CD8-positive, alpha-beta memory T cell (primary cell): ENCODE measurements at regions of chr2 and their contacts with region 1.

Region 1: DNA sequence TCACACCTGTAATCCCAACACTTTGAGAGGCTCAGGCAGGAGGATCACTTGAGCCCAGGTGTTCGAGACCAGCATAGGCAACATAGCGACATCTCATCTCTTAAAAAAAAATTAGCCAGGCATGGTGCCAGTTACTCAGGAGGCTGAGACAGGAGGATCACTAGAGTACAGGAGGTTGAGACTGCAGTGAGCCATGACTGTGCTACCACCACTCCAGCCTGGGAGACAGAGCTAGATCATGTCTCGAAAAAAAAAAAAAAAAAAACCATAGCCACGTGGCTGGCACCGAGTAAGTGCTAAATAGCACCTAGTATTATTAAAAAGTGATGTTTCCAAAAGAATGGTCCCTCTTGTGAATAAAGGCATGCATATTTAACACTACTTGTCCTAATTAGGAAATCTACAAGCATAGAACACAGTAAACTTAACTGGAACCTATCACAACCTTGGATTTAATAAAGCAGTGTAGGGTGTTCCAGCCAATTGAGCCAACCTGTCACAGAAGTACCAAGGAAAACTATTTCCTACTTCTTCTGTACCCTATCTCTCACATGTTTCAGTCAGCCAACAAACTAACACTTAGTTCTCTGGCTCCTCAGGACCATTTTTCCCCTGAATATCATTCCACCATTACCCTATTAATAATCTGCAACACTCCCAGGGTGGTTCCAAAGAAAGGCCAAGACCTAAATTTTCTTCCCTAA is 8.8 kb downstream of the RAB1A start:
- DNase-seq: no peak
- H3K4me3 ChIP-seq: no peak overlapping the region
- H3K4me3 Mint-ChIP-seq: peak overlapping the region; percentile 10 to 60 (median 41)
- H3K27ac ChIP-seq: no peak overlapping the region
- H3K27ac Mint-ChIP-seq: peak overlapping the region in 6 of 8 donors; percentile 17 to 64 (median 28)
- H3K4me1 ChIP-seq: peaks cover 48% of the 10 kb centered on the region
- H3K4me1 Mint-ChIP-seq: peaks cover 61 to 95% (median 74%) of the 10 kb centered on the region in 3 donors
- H3K27me3 ChIP-seq: no peaks in the 10 kb centered on the region
- H3K27me3 Mint-ChIP-seq: no peaks in the 10 kb centered on the region

Region 2: DNA sequence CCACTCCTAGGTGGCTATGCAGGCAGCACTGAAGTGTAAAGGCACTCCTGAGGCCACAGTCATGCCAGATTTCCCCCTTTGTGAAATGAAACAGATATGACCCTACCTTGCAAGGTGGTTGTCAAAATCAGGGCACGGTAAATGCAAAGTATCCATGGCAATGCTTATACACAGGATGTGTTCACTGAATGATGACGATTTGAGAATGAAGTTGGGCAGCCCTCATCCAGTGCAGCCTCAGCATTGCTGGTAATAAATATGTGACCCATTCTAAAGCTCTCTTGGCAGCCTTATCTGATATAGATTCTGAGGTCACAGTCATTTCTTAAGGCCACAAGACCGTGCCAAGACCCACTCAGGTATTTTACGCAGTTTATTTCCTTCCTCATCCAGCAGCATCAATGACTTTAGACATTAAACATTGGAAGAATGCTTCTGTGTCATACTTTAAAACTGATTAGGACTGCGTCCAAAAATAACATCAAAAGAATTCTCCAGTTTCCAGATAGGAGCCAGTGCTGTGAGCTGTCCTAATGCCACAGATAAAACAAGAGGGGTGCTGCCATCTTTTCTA is 341.9 kb before region 1 on chr2:
- CTCF ChIA-PET with region 1: no interaction called
- POLR2A ChIA-PET with region 1: no interaction called
- DNase-seq: no peak
- H3K4me3 ChIP-seq: no peak overlapping the region
- H3K4me3 Mint-ChIP-seq: no peak overlapping the region
- H3K27ac ChIP-seq: no peak overlapping the region
- H3K27ac Mint-ChIP-seq: peak overlapping the region in 1 of 8 donors; percentile 40
- H3K4me1 ChIP-seq: no peaks in the 10 kb centered on the region
- H3K4me1 Mint-ChIP-seq: no peaks in the 10 kb centered on the region
- H3K27me3 ChIP-seq: no peaks in the 10 kb centered on the region
- H3K27me3 Mint-ChIP-seq: peaks cover 0 to 3% of the 10 kb centered on the region in 2 donors

Region 3: DNA sequence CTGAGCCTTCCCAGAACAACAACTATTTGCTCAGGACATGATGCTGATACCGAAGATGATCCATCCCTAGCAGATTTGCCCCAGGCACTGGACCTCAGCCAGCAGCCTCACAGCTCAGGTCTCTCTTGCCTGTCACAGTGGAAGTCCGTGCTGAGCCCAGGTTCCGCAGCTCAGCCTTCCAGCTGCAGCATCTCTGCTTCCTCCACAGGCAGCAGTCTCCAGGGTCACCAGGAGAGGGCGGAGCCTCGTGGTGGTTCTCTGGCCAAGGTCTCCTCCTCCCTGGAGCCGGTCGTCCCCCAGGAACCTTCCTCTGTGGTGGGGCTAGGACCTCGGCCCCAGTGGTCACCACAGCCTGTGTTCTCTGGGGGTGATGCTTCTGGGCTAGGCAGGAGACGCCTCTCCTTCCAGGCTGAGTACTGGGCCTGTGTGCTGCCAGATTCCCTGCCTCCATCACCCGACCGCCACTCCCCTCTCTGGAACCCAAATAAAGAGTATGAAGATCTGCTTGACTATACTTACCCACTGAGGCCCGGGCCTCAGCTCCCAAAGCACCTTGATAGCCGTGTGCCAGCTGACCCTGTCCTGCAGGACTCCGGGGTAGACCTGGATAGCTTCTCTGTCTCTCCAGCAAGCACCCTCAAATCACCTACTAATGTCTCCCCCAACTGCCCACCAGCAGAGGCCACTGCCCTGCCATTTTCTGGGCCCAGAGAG is 49.5 kb before region 1 on chr2:
- CTCF ChIA-PET with region 1: no interaction called
- POLR2A ChIA-PET with region 1: interaction called, 14 read pairs
- DNase-seq: no peak
- H3K4me3 ChIP-seq: no peak overlapping the region
- H3K4me3 Mint-ChIP-seq: peak overlapping the region in 1 of 7 donors; percentile 23
- H3K27ac ChIP-seq: no peak overlapping the region
- H3K27ac Mint-ChIP-seq: peak overlapping the region in 4 of 8 donors; percentile 8 to 81 (median 42)
- H3K4me1 ChIP-seq: peaks cover 13% of the 10 kb centered on the region
- H3K4me1 Mint-ChIP-seq: peaks cover 19 to 33% (median 19%) of the 10 kb centered on the region in 3 donors
- H3K27me3 ChIP-seq: no peaks in the 10 kb centered on the region
- H3K27me3 Mint-ChIP-seq: no peaks in the 10 kb centered on the region

Region 4: DNA sequence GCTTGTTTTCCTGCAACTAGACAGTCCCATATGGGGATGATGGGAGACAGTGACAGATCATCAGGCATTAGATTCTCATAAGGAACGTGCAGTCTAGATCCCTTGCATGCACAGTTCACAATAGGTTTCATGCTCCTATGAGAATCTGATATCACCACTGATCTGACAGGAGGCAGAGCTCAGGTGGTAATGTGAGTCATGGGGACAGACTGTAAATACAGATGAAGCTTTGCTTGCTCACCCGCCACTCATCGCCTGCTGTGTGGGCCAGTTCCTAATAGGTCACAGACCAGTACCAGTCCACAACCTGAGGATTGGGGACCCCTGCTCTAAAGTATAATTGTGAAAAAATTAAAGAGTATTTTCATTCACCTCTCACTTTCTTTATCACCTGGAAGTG is 32.4 kb after region 1 on chr2:
- CTCF ChIA-PET with region 1: no interaction called
- POLR2A ChIA-PET with region 1: no interaction called
- DNase-seq: no peak
- H3K4me3 ChIP-seq: no peak overlapping the region
- H3K4me3 Mint-ChIP-seq: no peak overlapping the region
- H3K27ac ChIP-seq: no peak overlapping the region
- H3K27ac Mint-ChIP-seq: no peak overlapping the region
- H3K4me1 ChIP-seq: no peaks in the 10 kb centered on the region
- H3K4me1 Mint-ChIP-seq: no peaks in the 10 kb centered on the region
- H3K27me3 ChIP-seq: no peaks in the 10 kb centered on the region
- H3K27me3 Mint-ChIP-seq: peaks cover 0 to 7% of the 10 kb centered on the region in 2 donors

Region 5: GRCh38 chr2:65746931-65747675 is 626.0 kb after region 1 on chr2:
- CTCF ChIA-PET with region 1: no interaction called
- POLR2A ChIA-PET with region 1: no interaction called
- DNase-seq: no peak
- H3K4me3 ChIP-seq: no peak overlapping the region
- H3K4me3 Mint-ChIP-seq: no peak overlapping the region
- H3K27ac ChIP-seq: no peak overlapping the region
- H3K27ac Mint-ChIP-seq: peak overlapping the region in 1 of 8 donors; percentile 9
- H3K4me1 ChIP-seq: no peaks in the 10 kb centered on the region
- H3K4me1 Mint-ChIP-seq: no peaks in the 10 kb centered on the region
- H3K27me3 ChIP-seq: no peaks in the 10 kb centered on the region
- H3K27me3 Mint-ChIP-seq: peaks cover 0 to 4% of the 10 kb centered on the region in 2 donors